ENCODE measurements at regions of chr16 and their contacts with region 1.

Region 1: DNA sequence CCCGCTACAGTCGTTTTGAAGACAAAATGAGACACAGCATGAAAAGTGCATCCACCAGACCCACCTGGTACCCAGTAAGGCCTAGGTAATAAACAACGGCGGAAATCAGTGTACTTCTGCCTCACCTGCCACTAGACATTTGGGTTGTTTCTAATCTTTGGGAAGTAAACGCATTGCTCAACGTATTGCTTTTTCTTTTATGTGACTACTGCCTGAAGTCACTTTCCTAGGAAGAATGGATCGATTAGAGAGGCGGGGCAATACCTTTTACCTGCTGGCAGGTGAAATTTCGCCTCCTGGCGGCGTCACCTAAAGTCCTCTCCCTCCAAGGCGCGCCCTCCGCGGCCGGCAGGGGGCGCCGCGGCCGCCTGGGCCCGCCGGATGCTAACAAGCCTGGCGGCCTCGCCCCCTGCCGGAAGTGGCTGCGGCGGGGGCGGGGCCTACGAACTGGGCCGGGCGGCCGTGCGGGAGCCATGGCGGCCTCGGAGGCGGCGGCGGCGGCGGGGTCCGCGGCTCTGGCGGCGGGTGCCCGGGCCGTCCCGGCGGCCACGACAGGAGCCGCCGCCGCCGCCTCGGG is at the start of gene ATMIN:
- DNase-seq: peak; percentile 43
- H3K4me3 ChIP-seq: peak within 1 kb of the TSS; percentile 66
- CTCF ChIP-seq: peak; percentile 96

Region 2: GRCh38 chr16:80931801-80932712 is 103.4 kb before region 1 on chr16:
- in situ Hi-C with region 1: loop called (anchors 5 kb)
- DNase-seq: peak; percentile 19
- H3K4me3 ChIP-seq: peak overlapping the region; percentile 41
- CTCF ChIP-seq: peak; percentile 17

Region 3: GRCh38 chr16:81080233-81080632 is 44.7 kb after region 1 on chr16:
- in situ Hi-C with region 1: loop called (anchors 5 kb)
- DNase-seq: no peak
- H3K4me3 ChIP-seq: no peak overlapping the region
- CTCF ChIP-seq: no peak

Region 4: DNA sequence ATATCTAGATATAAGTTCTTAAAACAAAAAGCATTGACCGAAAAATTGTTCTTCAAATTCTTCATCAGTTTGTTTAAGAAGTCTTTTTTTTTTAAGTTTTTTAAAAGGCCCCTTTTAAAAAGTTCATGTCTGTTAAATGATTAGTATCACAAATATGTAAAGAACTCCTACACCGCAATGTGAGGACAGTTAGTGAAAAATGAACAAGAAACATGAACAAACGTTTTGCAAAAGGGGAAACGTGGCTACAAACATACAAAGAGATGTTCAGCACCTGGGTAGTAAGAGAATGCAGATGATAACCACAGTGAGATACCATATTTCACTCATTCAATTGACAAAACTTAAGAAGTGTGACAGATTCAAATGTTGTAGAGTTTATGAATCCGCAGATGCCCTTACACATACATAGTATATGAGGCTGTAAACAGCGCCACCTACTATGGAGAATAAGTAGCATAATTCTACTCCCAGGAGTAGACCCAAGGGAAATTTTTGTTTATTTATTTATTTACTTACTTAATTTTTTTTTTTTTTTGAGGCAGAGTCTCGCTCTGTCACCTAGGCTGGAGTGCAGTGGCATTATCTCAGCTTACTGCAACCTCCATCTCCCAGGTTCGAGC is 314.6 kb after region 1 on chr16:
- in situ Hi-C with region 1: loop called (anchors 25 kb)
- DNase-seq: no peak
- H3K4me3 ChIP-seq: no peak overlapping the region
- CTCF ChIP-seq: no peak

Region 5: GRCh38 chr16:81737885-81738786 is 702.6 kb after region 1 on chr16:
- in situ Hi-C with region 1: loop called (anchors 25 kb)
- DNase-seq: peak; percentile 65
- H3K4me3 ChIP-seq: peak overlapping the region; percentile 27
- CTCF ChIP-seq: peak; percentile 72